MCF 10A (cell line): ENCODE measurements at regions of chr4 and their contacts with region 1.

Region 1: DNA sequence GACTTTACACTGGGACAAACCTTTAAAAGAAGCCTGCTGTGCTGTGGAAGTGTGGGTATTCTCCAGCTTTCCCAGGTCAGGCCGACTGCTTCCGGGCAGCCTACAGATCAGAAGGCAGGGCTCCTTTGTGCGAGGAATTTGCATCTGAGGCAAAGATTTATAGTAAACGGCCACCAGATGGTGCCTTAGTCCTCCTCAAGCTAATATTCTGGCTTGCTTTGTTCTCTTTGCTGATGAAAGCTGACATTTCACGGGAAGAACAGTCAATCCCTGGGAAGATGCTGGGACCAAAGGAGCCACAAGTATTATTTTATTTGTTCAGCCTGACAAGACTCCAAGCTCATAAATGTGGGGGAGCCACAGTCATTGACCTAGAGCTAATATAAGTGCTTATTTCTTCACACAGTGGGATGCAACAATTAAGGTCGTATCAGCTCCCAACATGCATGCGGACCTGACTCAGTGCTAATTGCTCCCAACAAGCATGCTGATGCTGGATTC is 120.7 kb upstream of the TRIM2 start:
- DNase-seq: peak; percentile 83
- H3K4me3 Mint-ChIP-seq: no peak overlapping the region
- H3K27ac Mint-ChIP-seq: peak overlapping the region; percentile 67
- H3K4me1 Mint-ChIP-seq: peaks cover 15% of the 10 kb centered on the region
- H3K27me3 Mint-ChIP-seq: no peaks in the 10 kb centered on the region
- CTCF ChIP-seq: peak; percentile 57

Region 2: DNA sequence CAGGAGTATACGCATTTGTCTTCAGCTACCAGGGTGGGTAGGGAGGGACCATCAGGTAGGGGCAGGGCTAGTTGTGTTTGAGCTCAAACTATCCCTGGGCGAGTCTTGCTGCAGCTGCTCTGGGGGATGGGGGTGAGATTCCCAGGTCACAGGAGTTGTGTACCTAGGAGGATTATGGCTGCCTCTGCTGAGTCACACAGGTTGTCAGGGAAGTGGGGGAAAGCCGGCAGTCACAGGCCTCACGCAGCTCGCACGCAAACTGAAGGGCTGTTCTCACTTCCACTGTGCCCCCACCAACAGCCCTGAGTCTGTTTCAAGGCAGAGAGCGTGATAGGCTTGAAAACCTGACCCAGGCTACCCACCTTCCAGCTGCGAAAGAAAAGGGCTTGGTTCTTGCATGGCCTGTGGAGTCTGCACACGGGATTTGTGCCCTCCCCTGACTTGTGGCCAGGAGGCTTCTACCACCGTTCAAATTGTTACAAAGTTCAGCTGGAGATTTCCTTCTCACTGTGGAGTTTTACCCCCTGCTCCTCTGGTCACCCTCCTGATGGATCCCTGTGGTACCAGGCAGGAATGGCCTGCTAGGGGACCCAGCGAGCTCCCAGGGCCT is 239.9 kb before region 1 on chr4:
- CTCF ChIA-PET with region 1: interaction called, 70 read pairs
- POLR2A ChIA-PET with region 1: interaction called, 6 read pairs
- intact Hi-C with region 1: loop called (anchors 1 kb)
- DNase-seq: no peak
- H3K4me3 Mint-ChIP-seq: no peak overlapping the region
- H3K27ac Mint-ChIP-seq: no peak overlapping the region
- H3K4me1 Mint-ChIP-seq: no peaks in the 10 kb centered on the region
- H3K27me3 Mint-ChIP-seq: no peaks in the 10 kb centered on the region
- CTCF ChIP-seq: no peak

Region 3: GRCh38 chr4:152937336-152938236 is 145.9 kb before region 1 on chr4:
- CTCF ChIA-PET with region 1: interaction called, 16 read pairs
- POLR2A ChIA-PET with region 1: interaction called, 9 read pairs
- intact Hi-C with region 1: loop called (anchors 2 kb)
- DNase-seq: peak; percentile 42
- H3K4me3 Mint-ChIP-seq: peak overlapping the region; percentile 84
- H3K27ac Mint-ChIP-seq: peak overlapping the region; percentile 2
- H3K4me1 Mint-ChIP-seq: peaks cover 16% of the 10 kb centered on the region
- H3K27me3 Mint-ChIP-seq: no peaks in the 10 kb centered on the region
- CTCF ChIP-seq: no peak

Region 4: GRCh38 chr4:153095448-153096204 is 12.1 kb after region 1 on chr4:
- CTCF ChIA-PET with region 1: interaction called, 58 read pairs
- POLR2A ChIA-PET with region 1: interaction called, 3 read pairs
- intact Hi-C with region 1: no loop called
- DNase-seq: no peak
- H3K4me3 Mint-ChIP-seq: no peak overlapping the region
- H3K27ac Mint-ChIP-seq: no peak overlapping the region
- H3K4me1 Mint-ChIP-seq: no peaks in the 10 kb centered on the region
- H3K27me3 Mint-ChIP-seq: no peaks in the 10 kb centered on the region
- CTCF ChIP-seq: no peak

Region 5: GRCh38 chr4:153115322-153116290 is 32.1 kb after region 1 on chr4:
- CTCF ChIA-PET with region 1: interaction called, 40 read pairs
- POLR2A ChIA-PET with region 1: no interaction called
- intact Hi-C with region 1: no loop called
- DNase-seq: peak; percentile 67
- H3K4me3 Mint-ChIP-seq: no peak overlapping the region
- H3K27ac Mint-ChIP-seq: no peak overlapping the region
- H3K4me1 Mint-ChIP-seq: no peaks in the 10 kb centered on the region
- H3K27me3 Mint-ChIP-seq: no peaks in the 10 kb centered on the region
- CTCF ChIP-seq: no peak

Region 6: DNA sequence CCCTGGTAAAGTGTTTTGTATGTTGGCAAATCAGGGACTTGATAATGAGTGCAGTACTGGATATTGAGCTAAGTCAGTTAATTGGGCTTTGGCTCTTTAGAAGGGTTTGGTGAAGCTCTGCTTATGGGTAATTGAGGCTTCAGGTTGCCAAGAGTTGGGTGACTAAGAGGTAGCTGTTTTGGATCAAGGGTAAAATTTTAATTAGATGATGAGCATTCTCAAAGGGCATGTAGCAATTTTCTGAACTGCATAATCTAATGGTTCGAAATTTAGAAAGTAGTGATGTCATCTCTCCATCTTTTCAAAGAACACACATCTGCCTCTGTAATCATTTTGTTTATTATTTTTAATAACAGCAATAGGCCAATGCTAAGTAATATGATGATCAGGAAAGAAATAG is 115.2 kb after region 1 on chr4:
- CTCF ChIA-PET with region 1: no interaction called
- POLR2A ChIA-PET with region 1: no interaction called
- intact Hi-C with region 1: no loop called
- DNase-seq: no peak
- H3K4me3 Mint-ChIP-seq: no peak overlapping the region
- H3K27ac Mint-ChIP-seq: no peak overlapping the region
- H3K4me1 Mint-ChIP-seq: no peaks in the 10 kb centered on the region
- H3K27me3 Mint-ChIP-seq: no peaks in the 10 kb centered on the region
- CTCF ChIP-seq: no peak

Region 7: GRCh38 chr4:153573881-153574802 is 490.6 kb after region 1 on chr4:
- CTCF ChIA-PET with region 1: no interaction called
- POLR2A ChIA-PET with region 1: no interaction called
- intact Hi-C with region 1: loop called (anchors 10 kb)
- DNase-seq: peak; percentile 70
- H3K4me3 Mint-ChIP-seq: no peak overlapping the region
- H3K27ac Mint-ChIP-seq: no peak overlapping the region
- H3K4me1 Mint-ChIP-seq: no peaks in the 10 kb centered on the region
- H3K27me3 Mint-ChIP-seq: no peaks in the 10 kb centered on the region
- CTCF ChIP-seq: peak; percentile 73